Activated CD4-positive, alpha-beta memory T cell treated with anti-CD3 and anti-CD28 coated beads for 36 hours (primary cell): ENCODE measurements at regions of chr17 and their contacts with region 1.

Region 1: DNA sequence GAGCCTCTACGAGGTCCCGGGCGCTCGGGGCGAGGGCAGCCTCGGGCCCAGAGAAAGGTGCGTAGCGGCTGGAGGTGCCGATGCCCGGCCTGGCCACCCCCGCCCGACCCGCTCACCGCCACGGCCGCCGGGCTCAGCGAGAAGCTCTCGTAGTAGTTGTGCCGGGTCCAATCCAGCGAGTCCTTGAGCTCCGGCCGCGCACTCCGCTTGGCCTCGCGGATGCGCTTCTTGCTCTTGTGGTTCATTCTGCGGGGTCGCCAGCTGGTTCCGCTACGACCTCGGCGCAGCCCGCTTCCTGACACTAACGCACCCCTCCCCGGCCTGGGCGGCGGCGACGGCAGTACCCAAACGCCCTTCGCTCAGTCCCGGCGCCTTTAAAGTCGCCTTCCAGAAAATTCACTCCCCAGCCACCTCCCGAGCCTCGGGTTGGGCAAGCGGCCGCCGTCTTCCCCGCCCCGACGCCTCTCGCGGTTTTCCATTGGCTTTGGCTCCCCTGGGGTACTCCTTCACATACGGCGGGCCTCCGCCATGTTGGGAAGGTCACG is at the start of gene JMJD6:
- DNase-seq: peak; percentile 98
- H3K4me3 Mint-ChIP-seq: peak within 1 kb of the TSS; percentile 96
- H3K27ac Mint-ChIP-seq: peak within 1 kb of the TSS; percentile 95
- H3K4me1 Mint-ChIP-seq: peaks cover 46% of the 10 kb centered on the region
- H3K27me3 Mint-ChIP-seq: no peaks in the 10 kb centered on the region
- total RNA-seq, gene JMJD6: 53.4 to 56.6 TPM

Region 2: GRCh38 chr17:76515274-76515949 is 210.9 kb before region 1 on chr17:
- CTCF ChIA-PET with region 1: no interaction called
- POLR2A ChIA-PET with region 1: no interaction called
- intact Hi-C with region 1: loop called (anchors 1 kb)
- DNase-seq: peak; percentile 91
- H3K4me3 Mint-ChIP-seq: peak overlapping the region; percentile 62
- H3K27ac Mint-ChIP-seq: peak overlapping the region; percentile 95
- H3K4me1 Mint-ChIP-seq: peaks cover 45% of the 10 kb centered on the region
- H3K27me3 Mint-ChIP-seq: no peaks in the 10 kb centered on the region

Region 3: DNA sequence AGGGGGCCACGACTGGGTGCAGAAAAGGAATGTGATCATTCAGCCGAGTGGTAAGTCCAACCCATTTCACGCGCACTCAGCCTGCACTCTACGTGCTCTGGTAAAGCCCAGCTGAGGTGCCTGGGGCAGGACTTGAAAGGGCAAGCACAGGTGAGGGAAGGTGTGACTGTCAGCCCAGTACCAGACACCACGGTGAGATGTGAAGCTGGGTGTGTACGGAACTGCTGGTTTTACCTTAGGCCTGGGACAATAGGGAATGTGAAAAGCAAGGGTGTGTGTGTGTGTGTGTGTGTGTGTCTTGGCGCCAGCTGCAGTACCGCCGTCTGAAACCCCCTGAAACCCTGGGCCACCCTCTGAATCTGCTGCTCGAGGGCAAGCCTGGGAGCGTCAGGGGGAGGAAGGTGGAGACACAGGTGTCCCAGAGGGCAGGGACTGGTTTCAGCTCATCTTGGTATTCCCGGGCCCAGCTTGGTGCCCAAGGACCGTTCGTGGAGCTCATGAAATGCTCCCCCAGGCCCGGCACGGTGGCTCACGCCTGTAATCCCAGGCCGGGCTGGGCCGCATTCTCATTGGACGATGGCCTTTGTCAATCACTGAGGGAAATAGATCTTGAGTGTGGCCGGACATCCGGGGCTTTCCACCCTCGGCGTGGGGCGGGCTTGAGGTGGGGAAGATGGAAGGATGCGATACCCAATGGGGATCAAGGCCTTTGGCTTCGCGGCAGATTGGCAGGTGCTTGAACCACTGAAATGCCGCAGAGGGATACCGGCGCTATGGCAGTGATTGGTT is 55.0 kb before region 1 on chr17:
- CTCF ChIA-PET with region 1: no interaction called
- POLR2A ChIA-PET with region 1: no interaction called
- intact Hi-C with region 1: loop called (anchors 5 kb)
- DNase-seq: peak; percentile 100
- H3K4me3 Mint-ChIP-seq: peak overlapping the region; percentile 90
- H3K27ac Mint-ChIP-seq: peak overlapping the region; percentile 93
- H3K4me1 Mint-ChIP-seq: peaks cover 24% of the 10 kb centered on the region
- H3K27me3 Mint-ChIP-seq: no peaks in the 10 kb centered on the region

Region 4: DNA sequence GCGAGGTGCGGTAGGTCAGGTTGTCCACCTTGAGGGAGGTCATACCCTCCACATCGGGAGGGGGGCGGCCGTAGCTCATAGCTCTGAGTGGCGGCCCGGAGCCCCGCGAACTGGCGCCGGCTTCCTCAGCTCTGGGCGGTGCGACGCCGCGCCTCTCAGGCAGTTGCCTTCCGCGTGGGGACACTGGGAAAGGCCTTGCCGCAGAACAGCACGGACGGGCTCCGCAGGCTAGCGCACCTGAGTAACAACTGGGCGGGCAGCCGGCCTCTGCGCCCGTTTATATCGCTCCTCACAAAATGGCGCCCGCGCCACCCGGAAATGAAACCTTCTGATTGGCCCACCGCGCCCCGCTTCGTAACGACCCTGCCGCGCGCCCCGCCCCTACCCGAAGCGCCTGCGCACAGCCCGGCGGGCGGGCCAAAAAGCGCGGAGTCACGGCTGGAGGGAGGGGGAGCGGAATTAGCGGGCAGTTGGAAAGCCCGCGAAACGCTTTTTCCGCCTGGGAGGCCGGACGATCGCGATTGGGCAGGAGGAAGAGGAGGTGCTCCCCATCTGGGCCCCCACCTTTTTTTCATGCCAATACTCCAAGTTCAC is 10.9 kb after region 1 on chr17 and contains the start of gene SRSF2:
- CTCF ChIA-PET with region 1: interaction called, 10 read pairs
- POLR2A ChIA-PET with region 1: interaction called, 79 read pairs
- intact Hi-C with region 1: loop called (anchors 1 kb)
- DNase-seq: peak; percentile 99
- H3K4me3 Mint-ChIP-seq: peak within 1 kb of the TSS; percentile 95
- H3K27ac Mint-ChIP-seq: peak within 1 kb of the TSS; percentile 100
- H3K4me1 Mint-ChIP-seq: peaks cover 46% of the 10 kb centered on the region
- H3K27me3 Mint-ChIP-seq: no peaks in the 10 kb centered on the region
- total RNA-seq, gene SRSF2: 299 TPM

Region 5: GRCh38 chr17:76834870-76835269 is 108.6 kb after region 1 on chr17:
- CTCF ChIA-PET with region 1: no interaction called
- POLR2A ChIA-PET with region 1: no interaction called
- intact Hi-C with region 1: loop called (anchors 5 kb)
- DNase-seq: no peak
- H3K4me3 Mint-ChIP-seq: no peak overlapping the region
- H3K27ac Mint-ChIP-seq: no peak overlapping the region
- H3K4me1 Mint-ChIP-seq: peaks cover 2% of the 10 kb centered on the region
- H3K27me3 Mint-ChIP-seq: peaks cover 2% of the 10 kb centered on the region